OCI-LY7 (cell line): ENCODE measurements at regions of chr16 and their contacts with region 1.

Region 1: GRCh38 chr16:58661199-58661830 is 23.3 kb downstream of the SLC38A7 start:
- DNase-seq: peak; percentile 71
- H3K4me3 ChIP-seq: no peak overlapping the region
- H3K27ac ChIP-seq: no peak overlapping the region
- H3K4me1 ChIP-seq: no peaks in the 10 kb centered on the region
- CTCF ChIP-seq: peak; percentile 85

Region 2: DNA sequence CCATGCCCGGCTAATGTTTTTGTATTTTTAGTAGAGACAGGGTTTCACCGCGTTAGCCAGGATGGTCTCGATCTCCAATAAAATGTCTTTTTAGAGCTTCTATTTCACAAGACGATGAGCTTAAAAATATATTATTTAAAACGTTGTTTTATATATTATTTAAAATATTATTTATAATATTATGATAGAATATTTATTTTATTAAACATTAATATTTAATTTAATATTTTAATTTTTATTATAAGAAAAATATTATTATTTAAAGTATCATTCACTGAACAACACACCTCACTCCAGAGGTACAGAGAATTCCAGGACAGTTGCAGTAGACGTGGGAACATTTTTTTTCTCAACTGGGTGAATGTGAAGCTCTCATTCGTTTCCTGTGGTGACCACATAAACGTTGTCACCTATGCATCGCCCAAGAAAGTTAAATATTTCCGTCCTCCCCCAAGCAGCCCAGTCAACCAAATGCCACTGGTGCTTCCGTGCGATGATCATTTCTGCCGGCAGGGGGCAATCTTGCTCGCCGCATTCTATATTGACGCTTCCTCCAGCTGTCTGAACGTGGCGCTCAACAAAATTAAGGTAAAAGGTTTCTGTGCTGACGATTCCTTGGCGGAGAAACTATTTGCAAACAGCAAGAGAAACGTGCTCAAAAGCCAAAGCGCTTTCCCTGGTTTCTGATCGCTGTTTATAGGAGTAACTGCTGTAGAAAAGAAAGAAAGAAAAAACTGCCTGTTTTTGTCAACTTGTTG is 324.8 kb before region 1 on chr16:
- CTCF ChIA-PET with region 1: no interaction called
- POLR2A ChIA-PET with region 1: interaction called, 5 read pairs
- intact Hi-C with region 1: loop called (anchors 1 kb)
- DNase-seq: peak; percentile 86
- H3K4me3 ChIP-seq: no peak overlapping the region
- H3K27ac ChIP-seq: no peak overlapping the region
- H3K4me1 ChIP-seq: peaks cover 26% of the 10 kb centered on the region
- CTCF ChIP-seq: peak; percentile 99

Region 3: GRCh38 chr16:58494981-58495520 is 166.3 kb before region 1 on chr16:
- CTCF ChIA-PET with region 1: no interaction called
- POLR2A ChIA-PET with region 1: no interaction called
- intact Hi-C with region 1: loop called (anchors 5 kb)
- DNase-seq: peak; percentile 68
- H3K4me3 ChIP-seq: no peak overlapping the region
- H3K27ac ChIP-seq: no peak overlapping the region
- H3K4me1 ChIP-seq: peaks cover 26% of the 10 kb centered on the region
- CTCF ChIP-seq: peak; percentile 71

Region 4: DNA sequence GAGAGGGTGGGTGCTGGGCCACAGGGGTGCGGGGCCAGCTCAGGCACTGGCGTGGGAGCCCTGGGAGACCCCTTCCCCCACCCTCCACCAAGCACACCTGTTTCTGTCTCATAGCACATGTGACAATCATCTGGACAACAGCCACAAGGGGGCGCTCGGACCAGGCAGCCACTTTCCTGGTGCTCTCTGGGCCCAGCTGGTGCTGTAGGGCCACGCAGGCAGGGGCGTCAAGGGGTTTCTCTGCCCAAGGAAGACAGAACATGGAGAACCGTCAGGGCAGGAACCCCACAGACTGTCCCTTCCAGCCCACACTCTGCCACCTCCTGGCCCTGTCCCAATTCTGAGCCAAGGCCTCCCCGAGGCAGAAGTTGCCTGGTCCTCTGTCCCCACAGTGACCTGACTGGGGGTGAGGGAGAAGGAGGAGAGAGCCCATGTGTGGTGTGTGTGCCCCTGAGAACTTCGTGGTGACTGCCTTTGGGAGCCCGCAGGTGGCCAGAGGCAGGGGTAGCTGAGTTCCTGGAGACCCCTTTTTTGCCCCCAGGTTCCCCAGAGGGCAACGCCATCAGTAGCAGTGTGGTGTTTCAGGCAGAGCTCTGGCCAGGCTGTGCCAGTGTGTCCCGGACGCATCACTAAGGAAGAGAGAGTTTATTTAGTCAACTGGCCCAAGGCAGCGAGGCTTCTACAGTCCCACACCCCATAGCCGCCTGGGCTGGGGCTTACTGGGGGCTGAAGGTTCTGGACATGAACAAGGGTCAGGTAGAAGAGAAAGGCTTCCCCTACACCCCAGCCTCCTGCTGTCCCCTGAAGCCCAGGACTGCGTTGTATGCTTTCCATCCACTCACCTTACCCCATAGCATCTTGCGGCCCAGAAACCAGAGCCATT is 149.1 kb before region 1 on chr16:
- CTCF ChIA-PET with region 1: no interaction called
- POLR2A ChIA-PET with region 1: interaction called, 5 read pairs
- intact Hi-C with region 1: loop called (anchors 1 kb)
- DNase-seq: peak; percentile 84
- H3K4me3 ChIP-seq: no peak overlapping the region
- H3K27ac ChIP-seq: no peak overlapping the region
- H3K4me1 ChIP-seq: peaks cover 15% of the 10 kb centered on the region
- CTCF ChIP-seq: peak; percentile 89